ENCODE measurements at regions of chr12 and their contacts with region 1.

Region 1: DNA sequence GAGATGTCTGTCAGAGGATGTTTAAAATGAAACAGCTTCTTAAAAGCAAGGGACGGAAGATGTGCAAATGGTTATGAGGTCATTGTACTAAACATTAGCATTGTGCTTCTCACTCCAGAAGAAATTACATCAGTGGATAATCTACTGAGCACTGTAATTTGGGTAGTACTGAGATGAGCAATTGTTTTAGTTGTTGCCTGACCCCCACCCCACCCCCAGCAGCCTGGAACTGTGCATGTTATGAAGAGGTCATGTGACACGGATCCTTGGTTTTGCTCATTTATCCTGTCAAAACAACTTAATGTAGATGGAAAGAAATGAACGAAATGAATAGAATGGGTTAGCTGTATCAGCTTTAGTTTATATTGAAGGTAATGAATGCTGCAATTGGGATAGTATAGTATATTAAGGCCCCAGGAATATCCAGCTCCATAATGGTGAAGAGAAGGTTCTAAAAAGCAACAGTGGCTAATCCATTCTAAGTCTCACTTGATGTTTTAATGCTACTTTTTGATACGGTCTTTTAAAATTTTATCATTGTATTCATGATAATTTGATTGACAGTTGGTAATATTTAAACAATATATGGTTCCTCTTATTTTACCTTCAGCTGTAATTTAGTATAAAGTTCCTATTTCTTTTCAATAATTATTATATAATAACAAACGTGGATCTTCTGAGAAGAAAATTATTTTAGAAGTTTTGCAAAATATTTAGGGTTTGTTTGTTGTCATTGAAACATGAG is 58.5 kb downstream of the WNK1 start:
- DNase-seq: no peak
- H3K4me3 ChIP-seq: no peak overlapping the region
- H3K27ac ChIP-seq: no peak overlapping the region
- H3K4me1 ChIP-seq: peaks cover 38% of the 10 kb centered on the region
- CTCF ChIP-seq: no peak

Region 2: GRCh38 chr12:569803-570434 is 240.9 kb before region 1 on chr12:
- CTCF ChIA-PET with region 1: no interaction called
- POLR2A ChIA-PET with region 1: interaction called, 3 read pairs
- intact Hi-C with region 1: loop called (anchors 1 kb)
- DNase-seq: peak; percentile 83
- H3K4me3 ChIP-seq: peak overlapping the region; percentile 69
- H3K27ac ChIP-seq: no peak overlapping the region
- H3K4me1 ChIP-seq: peaks cover 9% of the 10 kb centered on the region
- CTCF ChIP-seq: peak; percentile 97

Region 3: DNA sequence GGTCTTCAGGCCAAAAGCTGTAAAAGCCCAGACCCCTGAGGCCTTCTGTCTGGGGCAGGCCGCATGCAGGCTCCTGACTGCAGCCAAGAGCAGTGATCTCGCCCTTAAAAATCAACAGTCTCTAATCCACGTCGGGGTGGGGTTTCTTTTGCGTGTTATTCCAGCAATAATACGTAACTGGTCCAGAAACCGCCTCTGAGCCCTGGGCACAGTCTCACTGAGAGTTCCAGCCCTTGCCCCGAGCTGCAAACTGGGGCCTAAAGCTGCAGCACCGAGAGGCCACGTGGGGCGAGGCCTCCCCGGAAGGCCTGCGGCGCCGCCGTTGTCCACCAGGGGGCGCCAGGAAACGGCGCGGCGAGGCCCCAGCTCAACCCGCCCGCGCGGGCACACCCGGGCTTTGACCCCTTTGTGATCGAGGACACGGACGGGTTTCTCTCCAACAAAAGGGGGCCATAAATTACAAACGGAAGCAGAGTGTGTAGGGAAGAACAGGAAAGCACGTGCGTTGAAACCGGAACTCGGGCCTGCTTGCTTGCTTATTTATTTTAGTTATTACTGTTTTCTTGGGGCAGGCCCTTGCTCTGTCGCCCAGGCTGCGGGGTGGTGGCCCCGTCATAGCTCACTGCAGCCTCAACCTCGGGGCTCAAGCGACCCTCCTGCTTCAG is 234.8 kb before region 1 on chr12:
- CTCF ChIA-PET with region 1: no interaction called
- POLR2A ChIA-PET with region 1: interaction called, 3 read pairs
- intact Hi-C with region 1: loop called (anchors 1 kb)
- DNase-seq: peak; percentile 87
- H3K4me3 ChIP-seq: no peak overlapping the region
- H3K27ac ChIP-seq: no peak overlapping the region
- H3K4me1 ChIP-seq: peaks cover 13% of the 10 kb centered on the region
- CTCF ChIP-seq: peak; percentile 98

Region 4: GRCh38 chr12:614411-614970 is 196.4 kb before region 1 on chr12:
- CTCF ChIA-PET with region 1: interaction called, 7 read pairs
- POLR2A ChIA-PET with region 1: interaction called, 4 read pairs
- intact Hi-C with region 1: loop called (anchors 1 kb)
- DNase-seq: peak; percentile 70
- H3K4me3 ChIP-seq: no peak overlapping the region
- H3K27ac ChIP-seq: no peak overlapping the region
- H3K4me1 ChIP-seq: peaks cover 15% of the 10 kb centered on the region
- CTCF ChIP-seq: peak; percentile 82

Region 5: GRCh38 chr12:737122-737739 is 73.6 kb before region 1 on chr12:
- CTCF ChIA-PET with region 1: no interaction called
- POLR2A ChIA-PET with region 1: no interaction called
- intact Hi-C with region 1: no loop called
- DNase-seq: no peak
- H3K4me3 ChIP-seq: no peak overlapping the region
- H3K27ac ChIP-seq: no peak overlapping the region
- H3K4me1 ChIP-seq: no peaks in the 10 kb centered on the region
- CTCF ChIP-seq: no peak

Region 6: GRCh38 chr12:843609-844008 is 32.8 kb after region 1 on chr12:
- CTCF ChIA-PET with region 1: no interaction called
- POLR2A ChIA-PET with region 1: no interaction called
- intact Hi-C with region 1: no loop called
- DNase-seq: no peak
- H3K4me3 ChIP-seq: no peak overlapping the region
- H3K27ac ChIP-seq: no peak overlapping the region
- H3K4me1 ChIP-seq: no peaks in the 10 kb centered on the region
- CTCF ChIP-seq: no peak